ENCODE measurements at regions of chr11 and their contacts with region 1.

Region 1: DNA sequence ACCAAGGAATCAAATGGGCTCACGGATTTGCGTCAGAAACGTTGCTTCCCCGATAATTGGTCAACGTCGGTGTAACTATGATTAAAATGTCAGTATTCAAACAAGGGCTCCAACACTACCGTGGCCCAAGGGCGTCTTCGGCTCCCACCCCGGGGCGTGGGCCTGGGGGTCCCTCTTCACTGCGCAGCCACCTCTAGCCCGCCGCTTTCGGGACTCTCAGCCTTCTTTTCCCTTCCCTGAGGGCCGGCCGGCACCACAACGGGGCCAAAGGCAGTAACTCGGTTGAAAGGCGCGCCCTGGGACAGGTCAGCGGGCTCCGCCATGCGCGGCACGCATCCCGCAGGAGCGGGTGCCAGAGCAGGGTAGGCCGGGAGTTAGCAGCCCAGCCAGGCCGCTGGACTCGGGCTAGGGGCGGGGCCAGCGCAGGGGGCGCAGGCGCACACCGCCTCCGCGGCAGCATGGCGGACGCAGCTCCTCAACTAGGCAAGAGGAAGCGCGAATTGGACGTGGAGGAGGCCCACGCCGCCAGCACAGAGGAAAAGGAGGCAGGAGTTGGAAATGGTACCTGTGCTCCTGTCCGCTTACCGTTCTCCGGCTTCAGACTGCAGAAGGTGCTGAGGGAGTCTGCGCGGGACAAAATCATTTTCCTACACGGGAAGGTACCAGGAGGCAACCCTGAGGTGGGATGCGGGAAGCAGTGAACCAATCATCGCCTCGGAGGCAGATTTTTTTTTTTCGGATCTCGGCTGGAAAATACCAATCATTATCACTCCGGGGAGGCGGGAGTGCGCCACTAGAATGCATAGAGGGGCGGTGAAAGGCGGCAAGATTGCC is at the start of gene DCPS:
- DNase-seq: peak; percentile 71 to 91 (median 79)
- ATAC-seq: peak; percentile 98 to 99 (median 99)
- H3K4me3 ChIP-seq: peak within 1 kb of the TSS; percentile 87 to 96
- H3K4me3 Mint-ChIP-seq: peak within 1 kb of the TSS; percentile 85 to 98 (median 90)
- H3K27ac ChIP-seq: peak within 1 kb of the TSS; percentile 90
- H3K27ac Mint-ChIP-seq: peak within 1 kb of the TSS; percentile 89 to 97
- H3K4me1 ChIP-seq: peaks cover 12 to 37% of the 10 kb centered on the region in 2 experiments
- H3K4me1 Mint-ChIP-seq: peaks cover 29 to 39% (median 29%) of the 10 kb centered on the region in 3 donors
- H3K27me3 ChIP-seq: no peaks in the 10 kb centered on the region
- H3K27me3 Mint-ChIP-seq: no peaks in the 10 kb centered on the region
- total RNA-seq, gene DCPS: 12.4 to 23.7 (median 19.8) TPM

Region 2: GRCh38 chr11:126233391-126233790 is 70.4 kb before region 1 on chr11:
- CTCF ChIA-PET with region 1: interaction called in 1 of 2 experiments, 10 read pairs
- POLR2A ChIA-PET with region 1: no interaction called
- DNase-seq: no peak
- ATAC-seq: no peak
- H3K4me3 ChIP-seq: no peak overlapping the region
- H3K4me3 Mint-ChIP-seq: no peak overlapping the region
- H3K27ac ChIP-seq: no peak overlapping the region
- H3K27ac Mint-ChIP-seq: no peak overlapping the region
- H3K4me1 ChIP-seq: no peaks in the 10 kb centered on the region
- H3K4me1 Mint-ChIP-seq: no peaks in the 10 kb centered on the region
- H3K27me3 ChIP-seq: no peaks in the 10 kb centered on the region
- H3K27me3 Mint-ChIP-seq: no peaks in the 10 kb centered on the region

Region 3: DNA sequence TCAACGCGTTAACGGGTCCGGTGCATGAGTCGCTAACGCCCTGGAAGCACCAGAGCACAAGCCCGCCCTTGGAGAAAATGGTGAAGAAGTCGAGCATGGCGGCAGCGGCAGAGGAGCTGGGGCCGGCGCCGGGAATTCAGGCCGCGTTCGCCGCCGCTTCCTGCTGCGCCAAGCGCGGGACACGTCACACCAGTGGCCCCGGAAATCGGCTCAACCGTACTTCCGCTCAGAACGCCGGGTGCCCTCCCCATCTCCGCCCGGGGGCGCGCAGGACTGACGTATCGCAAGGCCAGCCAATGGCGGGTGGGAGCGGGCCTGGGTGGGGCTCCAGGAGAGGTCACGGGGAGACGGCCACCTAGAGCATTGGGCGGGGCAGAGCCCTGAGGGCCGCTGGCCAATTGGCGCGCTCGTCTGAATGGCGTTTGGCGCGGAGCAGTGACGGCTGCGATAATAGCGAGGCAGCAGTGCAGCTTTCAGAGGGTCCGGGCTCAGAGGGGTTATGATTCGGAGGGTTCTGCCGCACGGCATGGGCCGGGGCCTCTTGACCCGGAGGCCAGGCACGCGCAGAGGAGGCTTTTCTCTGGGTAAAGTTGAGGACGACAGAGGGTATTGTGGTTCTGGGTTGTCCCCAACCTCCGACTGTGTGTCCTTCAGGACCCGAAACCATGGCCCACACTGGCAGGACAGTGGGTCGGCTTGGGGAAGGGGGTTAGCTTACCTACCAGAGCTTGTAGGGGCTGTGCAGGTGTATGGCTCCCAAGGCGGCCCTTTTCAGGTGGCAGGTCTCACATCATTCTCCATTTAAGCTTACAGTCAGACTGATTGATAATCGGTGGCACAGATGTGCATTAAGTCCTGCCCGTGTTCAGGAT is 34.9 kb before region 1 on chr11 and contains the starts of genes FOXRED1 and SRPRA:
- CTCF ChIA-PET with region 1: interaction called, 6 to 8 read pairs
- POLR2A ChIA-PET with region 1: interaction called, 3 to 15 read pairs
- DNase-seq: peak; percentile 97 to 100 (median 100)
- ATAC-seq: peak; percentile 97 to 99 (median 98)
- H3K4me3 ChIP-seq: peak within 1 kb of the TSS; percentile 91 to 97
- H3K4me3 Mint-ChIP-seq: peak within 1 kb of the TSS; percentile 94 to 99 (median 97)
- H3K27ac ChIP-seq: peak within 1 kb of the TSS; percentile 89
- H3K27ac Mint-ChIP-seq: peak within 1 kb of the TSS; percentile 97 to 98
- H3K4me1 ChIP-seq: peaks cover 18 to 20% of the 10 kb centered on the region in 2 experiments
- H3K4me1 Mint-ChIP-seq: peaks cover 41 to 49% (median 43%) of the 10 kb centered on the region in 3 donors
- H3K27me3 ChIP-seq: no peaks in the 10 kb centered on the region
- H3K27me3 Mint-ChIP-seq: no peaks in the 10 kb centered on the region
- total RNA-seq, gene FOXRED1: 32.5 to 38.5 (median 34.5) TPM
- total RNA-seq, gene SRPRA: 134 to 176 (median 142) TPM

Region 4: DNA sequence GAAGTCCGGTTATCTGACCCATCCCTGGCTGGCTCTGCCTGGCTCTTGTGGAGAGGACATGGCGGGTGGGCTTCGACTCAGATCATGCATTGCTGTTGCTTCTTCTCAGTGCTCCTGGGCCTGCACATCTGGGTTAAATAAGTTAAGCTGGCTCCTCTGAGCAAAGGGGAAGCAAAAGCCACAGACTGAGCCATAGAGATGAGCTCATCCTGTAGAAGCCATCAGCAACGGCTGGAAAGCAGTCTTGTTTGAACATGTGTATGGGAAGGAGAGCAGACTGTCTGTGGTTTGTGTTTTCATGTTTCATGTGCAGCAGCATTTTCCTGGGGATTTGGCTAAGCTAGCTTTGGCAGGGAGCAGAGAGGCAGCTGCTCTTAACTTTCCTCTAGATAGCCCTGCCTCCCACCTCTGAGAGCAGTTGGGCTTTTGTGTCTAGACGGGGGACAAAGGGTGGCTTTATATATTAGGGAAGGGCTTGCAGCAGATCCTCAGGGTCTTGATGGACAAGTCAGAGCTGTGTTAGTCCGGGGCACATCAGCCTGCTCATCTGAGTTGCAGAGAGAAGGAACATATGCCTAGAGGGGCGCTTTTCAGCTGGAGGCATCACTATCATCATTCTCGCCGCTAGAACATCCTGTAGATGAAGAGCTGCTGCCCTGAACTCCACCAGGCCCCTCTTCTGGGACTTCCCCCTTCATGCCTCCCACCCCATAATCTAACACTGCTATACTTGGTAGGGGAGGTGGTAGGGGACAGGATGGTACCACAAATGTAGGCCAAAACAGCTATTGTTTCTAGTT is 14.9 kb after region 1 on chr11:
- CTCF ChIA-PET with region 1: interaction called, 4 to 13 read pairs
- POLR2A ChIA-PET with region 1: no interaction called
- DNase-seq: peak in 15 of 35 experiments; percentile 12 to 56 (median 34)
- ATAC-seq: peak; percentile 72 to 78 (median 76)
- H3K4me3 ChIP-seq: no peak overlapping the region
- H3K4me3 Mint-ChIP-seq: peak overlapping the region; percentile 28 to 72 (median 29)
- H3K27ac ChIP-seq: peak overlapping the region; percentile 57
- H3K27ac Mint-ChIP-seq: peak overlapping the region; percentile 84 to 94
- H3K4me1 ChIP-seq: peaks cover 17 to 25% of the 10 kb centered on the region in 2 experiments
- H3K4me1 Mint-ChIP-seq: peaks cover 28 to 46% (median 36%) of the 10 kb centered on the region in 3 donors
- H3K27me3 ChIP-seq: no peaks in the 10 kb centered on the region
- H3K27me3 Mint-ChIP-seq: no peaks in the 10 kb centered on the region

Measured in T-cell (primary cell).